ENCODE measurements at regions of chr22 and their contacts with region 1.

Region 1: DNA sequence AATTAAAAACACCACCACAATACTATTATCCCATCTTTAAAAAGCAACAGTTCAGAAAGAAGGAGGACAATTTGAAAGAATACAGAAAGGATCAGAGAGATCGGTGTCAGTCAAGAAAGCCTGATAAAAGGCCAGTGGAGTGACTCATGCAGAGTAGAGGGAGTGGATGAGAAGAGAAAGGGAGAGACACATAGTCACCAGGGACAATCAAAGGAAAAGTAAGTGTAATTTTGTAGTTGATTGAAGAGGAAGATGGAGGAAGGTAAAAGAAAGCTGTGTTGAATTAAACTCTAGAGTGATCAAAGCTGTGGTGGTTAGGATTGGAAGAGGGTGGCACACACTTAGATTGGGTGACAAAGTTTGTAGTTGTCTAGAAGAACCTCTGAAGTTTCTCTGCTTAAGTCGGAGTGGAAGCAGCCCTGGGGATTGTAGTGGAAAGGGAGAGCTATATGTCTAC is 14.1 kb downstream of the SPECC1L start:
- H3K4me3 ChIP-seq: no peak overlapping the region
- H3K27ac ChIP-seq: no peak overlapping the region
- H3K4me1 ChIP-seq: peaks cover 16% of the 10 kb centered on the region
- CTCF ChIP-seq: no peak

Region 2: DNA sequence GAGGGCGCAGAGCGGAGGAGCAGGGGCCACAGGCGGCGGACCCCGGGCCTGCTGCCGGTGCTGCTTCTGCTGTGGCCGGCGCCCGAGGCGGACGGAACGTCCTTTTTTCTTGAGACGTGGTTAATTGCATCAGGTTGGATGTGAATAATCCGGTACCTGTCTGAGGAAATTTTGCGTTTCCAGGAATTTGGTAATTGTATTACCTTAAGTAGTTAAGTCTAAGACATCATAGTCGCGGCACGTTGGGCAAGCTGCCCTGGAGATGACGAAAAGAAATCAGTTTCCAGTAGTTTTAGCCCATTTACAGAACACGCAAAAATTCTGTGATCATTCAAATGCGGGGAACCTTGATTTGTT is 13.4 kb before region 1 on chr22:
- CTCF ChIA-PET with region 1: interaction called, 11 read pairs
- POLR2A ChIA-PET with region 1: interaction called, 3 read pairs
- H3K4me3 ChIP-seq: peak overlapping the region; percentile 100
- H3K27ac ChIP-seq: peak overlapping the region; percentile 97
- H3K4me1 ChIP-seq: peaks cover 16% of the 10 kb centered on the region
- CTCF ChIP-seq: no peak

Region 3: GRCh38 chr22:24337894-24338645 is 53.3 kb after region 1 on chr22:
- CTCF ChIA-PET with region 1: no interaction called
- POLR2A ChIA-PET with region 1: no interaction called
- H3K4me3 ChIP-seq: no peak overlapping the region
- H3K27ac ChIP-seq: no peak overlapping the region
- H3K4me1 ChIP-seq: no peaks in the 10 kb centered on the region
- CTCF ChIP-seq: no peak